Activated B cell treated with CpG ODN at 0.5 μM for 24 hours (primary cell): ENCODE measurements at regions of chr6 and their contacts with region 1.

Region 1: GRCh38 chr6:28940858-28941680 is 17.3 kb upstream of the TRIM27 start:
- DNase-seq: peak; percentile 36
- ATAC-seq: peak; percentile 66
- H3K4me3 Mint-ChIP-seq: peak overlapping the region; percentile 95
- H3K27ac Mint-ChIP-seq: peak overlapping the region; percentile 88
- H3K4me1 Mint-ChIP-seq: peaks cover 47% of the 10 kb centered on the region
- H3K27me3 Mint-ChIP-seq: peaks cover 3% of the 10 kb centered on the region
- CTCF ChIP-seq: no peak

Region 2: DNA sequence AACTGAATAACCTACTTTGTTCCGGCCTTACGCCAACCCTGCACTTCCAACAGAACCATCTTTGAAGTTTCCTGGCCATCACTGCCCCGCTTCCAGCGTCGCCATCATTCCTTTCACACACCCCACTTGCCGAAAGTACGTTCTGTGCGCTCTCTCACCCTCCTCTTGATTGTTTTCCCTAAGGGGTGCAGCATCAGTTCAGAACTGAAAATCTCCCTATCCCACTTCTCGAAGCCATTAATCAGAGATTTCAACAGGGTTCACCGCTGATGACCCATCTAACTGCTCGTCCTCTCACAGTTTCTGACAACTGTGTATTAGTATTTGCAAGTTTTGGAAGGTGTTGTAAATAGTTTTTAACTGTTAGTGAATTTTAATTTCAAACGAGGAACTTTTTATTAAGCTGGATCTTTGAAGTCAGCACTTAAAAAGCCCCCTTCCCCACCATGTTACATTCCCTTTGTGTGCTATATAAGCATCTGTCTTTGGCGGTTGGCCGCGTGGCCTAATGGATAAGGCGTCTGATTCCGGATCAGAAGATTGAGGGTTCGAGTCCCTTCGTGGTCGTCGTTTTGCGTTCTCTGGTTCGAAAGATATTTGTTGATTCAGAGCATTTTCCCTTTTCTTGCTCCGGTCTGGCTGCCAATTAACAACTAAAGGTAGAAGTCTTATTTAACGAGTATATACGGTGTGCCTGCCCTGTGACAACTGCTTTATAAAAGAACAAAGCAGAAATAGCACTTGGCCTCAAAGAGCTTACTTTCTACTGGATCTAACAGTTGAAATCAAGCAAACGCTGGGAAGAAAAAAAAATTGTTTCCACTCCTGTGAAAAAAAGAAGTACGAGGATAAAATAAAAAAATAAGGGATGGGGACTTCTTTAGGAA is 59.9 kb before region 1 on chr6:
- CTCF ChIA-PET with region 1: no interaction called
- POLR2A ChIA-PET with region 1: interaction called, 3 read pairs
- intact Hi-C with region 1: loop called (anchors 5 kb)
- DNase-seq: peak; percentile 48
- ATAC-seq: peak; percentile 39
- H3K4me3 Mint-ChIP-seq: peak overlapping the region; percentile 75
- H3K27ac Mint-ChIP-seq: peak overlapping the region; percentile 83
- H3K4me1 Mint-ChIP-seq: peaks cover 21% of the 10 kb centered on the region
- H3K27me3 Mint-ChIP-seq: peaks cover 51% of the 10 kb centered on the region
- CTCF ChIP-seq: no peak

Region 3: GRCh38 chr6:28923318-28924102 is 17.6 kb before region 1 on chr6 and contains the start of gene TRIM27:
- CTCF ChIA-PET with region 1: interaction called, 10 read pairs
- POLR2A ChIA-PET with region 1: interaction called, 47 read pairs
- intact Hi-C with region 1: loop called (anchors 1 kb)
- DNase-seq: peak; percentile 85
- ATAC-seq: peak; percentile 87
- H3K4me3 Mint-ChIP-seq: peak within 1 kb of the TSS; percentile 92
- H3K27ac Mint-ChIP-seq: peak within 1 kb of the TSS; percentile 92
- H3K4me1 Mint-ChIP-seq: peaks cover 42% of the 10 kb centered on the region
- H3K27me3 Mint-ChIP-seq: no peaks in the 10 kb centered on the region
- CTCF ChIP-seq: no peak
- total RNA-seq, gene TRIM27: 59.5 and 64.8 TPM in 2 replicates